K562 (cell line): ENCODE measurements at regions of chr11 and their contacts with region 1.

Region 1: DNA sequence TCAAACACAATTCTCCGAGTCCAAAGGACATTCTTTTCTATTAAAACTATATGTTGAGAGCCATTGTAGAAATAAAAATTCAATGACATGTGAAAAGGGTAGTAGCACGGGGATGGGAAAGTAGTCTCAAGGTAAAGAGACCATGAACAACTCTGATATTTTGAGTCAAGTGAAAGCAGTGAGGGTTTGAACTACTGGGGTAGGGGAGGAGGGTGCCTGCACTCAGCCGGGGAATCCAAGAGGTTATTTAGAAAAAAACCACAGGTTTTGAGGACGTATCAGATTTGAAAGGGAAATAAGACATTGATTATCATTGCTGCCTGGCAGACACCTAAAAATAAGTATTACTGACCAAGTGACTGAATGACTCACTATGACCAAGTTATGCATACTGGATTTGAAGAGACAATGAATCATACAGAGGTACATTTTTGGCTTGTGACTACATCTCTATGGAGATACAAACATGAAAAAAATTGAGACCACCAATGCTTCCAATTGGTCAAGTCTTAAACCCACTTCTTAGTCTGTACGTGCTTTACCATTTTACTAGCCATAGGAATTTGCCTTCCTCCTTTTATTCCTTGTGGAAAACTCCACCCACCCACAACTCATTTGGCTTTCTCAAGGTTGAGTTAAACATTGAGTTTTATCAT is 2.2 kb upstream of the OR52H1 start:
- DNase-seq: peak in 1 of 4 experiments; percentile 30
- ATAC-seq: peak; percentile 42; the same call in 1 of the 3 replicates
- H3K4me3 ChIP-seq: no peak overlapping the region
- H3K27ac ChIP-seq: no peak overlapping the region
- H3K4me1 ChIP-seq: peaks cover 0 to 6% of the 10 kb centered on the region in 2 experiments; a peak in 2 of 5 replicates
- H3K27me3 ChIP-seq: no peaks in the 10 kb centered on the region; a peak in 1 of 5 replicates
- CTCF ChIP-seq: no peak
- EP300 ChIP-seq: no peak
- POLR2A ChIP-seq: no peak
- RAD21 ChIP-seq: no peak

Region 2: DNA sequence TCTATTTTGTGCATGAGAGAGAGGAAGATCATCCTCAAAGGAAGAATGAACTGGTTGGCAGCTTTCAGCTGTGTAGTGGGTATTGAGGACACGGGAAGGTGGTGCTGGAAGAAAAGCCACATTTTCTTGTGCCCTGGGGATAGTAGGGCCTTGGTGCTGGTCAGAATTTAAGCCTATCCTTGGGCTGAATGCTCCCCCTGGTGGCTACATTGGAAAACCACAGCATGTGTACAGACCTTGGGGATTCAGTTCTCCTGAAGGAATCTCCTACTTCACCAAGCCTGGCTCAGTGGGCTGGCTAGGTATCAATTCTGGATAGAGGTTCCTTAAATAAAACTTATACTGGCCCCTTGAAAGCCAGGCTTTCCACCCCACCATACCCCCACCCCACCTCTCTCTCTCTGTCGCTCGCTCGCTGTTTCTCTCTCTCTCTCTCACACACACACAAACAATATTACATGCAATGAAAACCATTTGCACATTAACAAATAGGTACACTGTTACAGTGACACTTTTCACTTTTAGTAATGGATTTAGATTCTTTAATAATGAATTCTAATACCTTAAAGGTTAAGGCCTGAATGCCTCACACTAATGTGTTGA is 169.7 kb before region 1 on chr11:
- CTCF ChIA-PET with region 1: no interaction called
- POLR2A ChIA-PET with region 1: interaction called, 5 read pairs
- in situ Hi-C with region 1: no loop called
- intact Hi-C with region 1: loop called (anchors 10 kb)
- DNase-seq: peak; percentile 53 to 70 (median 56)
- ATAC-seq: peak; percentile 97
- H3K4me3 ChIP-seq: no peak overlapping the region
- H3K27ac ChIP-seq: no peak overlapping the region
- H3K4me1 ChIP-seq: no peaks in the 10 kb centered on the region; a peak in 1 of 5 replicates
- H3K27me3 ChIP-seq: no peaks in the 10 kb centered on the region
- CTCF ChIP-seq: peak; percentile 59 to 74 (median 69)
- EP300 ChIP-seq: no peak
- POLR2A ChIP-seq: no peak
- RAD21 ChIP-seq: peak; percentile 71 to 73

Region 3: DNA sequence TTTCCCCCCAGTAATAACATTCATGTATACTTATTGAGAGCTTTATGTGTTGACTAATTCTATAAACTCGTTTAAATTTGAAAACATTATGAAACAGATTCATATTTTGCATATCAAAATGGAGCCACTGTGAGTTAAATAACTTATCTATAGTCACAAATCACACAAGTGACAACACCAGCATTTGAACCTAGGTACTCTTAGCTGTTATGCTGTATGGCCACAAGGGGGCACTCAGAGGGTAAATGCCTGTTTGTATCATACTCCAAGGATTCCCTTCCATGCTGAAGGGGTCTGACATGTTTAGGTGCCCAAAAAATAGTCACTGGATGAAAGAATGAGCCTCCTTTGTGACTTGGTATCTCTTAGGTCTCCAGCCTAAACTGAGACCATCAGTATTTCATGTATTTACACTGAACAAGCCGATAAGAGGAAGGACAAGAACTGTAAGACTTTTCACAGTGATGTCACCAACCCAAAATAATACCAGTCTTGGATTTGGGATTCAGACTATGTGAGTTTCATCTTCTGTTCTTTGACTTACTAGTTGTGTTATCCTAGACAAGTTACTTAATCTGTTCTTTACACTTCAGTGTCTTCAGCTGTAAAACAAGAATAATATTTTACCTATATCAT is 74.3 kb before region 1 on chr11:
- CTCF ChIA-PET with region 1: interaction called, 13 read pairs
- POLR2A ChIA-PET with region 1: no interaction called
- in situ Hi-C with region 1: no loop called
- intact Hi-C with region 1: loop called (anchors 1 kb)
- DNase-seq: peak; percentile 69 to 77 (median 72)
- ATAC-seq: peak; percentile 97
- H3K4me3 ChIP-seq: no peak overlapping the region
- H3K27ac ChIP-seq: no peak overlapping the region; the same call in 2 of the 3 replicates
- H3K4me1 ChIP-seq: no peaks in the 10 kb centered on the region
- H3K27me3 ChIP-seq: no peaks in the 10 kb centered on the region
- CTCF ChIP-seq: peak; percentile 65 to 82 (median 79)
- EP300 ChIP-seq: no peak
- POLR2A ChIP-seq: no peak
- RAD21 ChIP-seq: peak; percentile 63 to 79

Region 4: GRCh38 chr11:5746614-5747013 is 196.0 kb after region 1 on chr11:
- CTCF ChIA-PET with region 1: no interaction called
- POLR2A ChIA-PET with region 1: no interaction called
- in situ Hi-C with region 1: no loop called
- intact Hi-C with region 1: no loop called
- DNase-seq: no peak
- ATAC-seq: no peak
- H3K4me3 ChIP-seq: no peak overlapping the region
- H3K27ac ChIP-seq: no peak overlapping the region
- H3K4me1 ChIP-seq: no peaks in the 10 kb centered on the region
- H3K27me3 ChIP-seq: no peaks in the 10 kb centered on the region
- CTCF ChIP-seq: no peak
- EP300 ChIP-seq: no peak
- POLR2A ChIP-seq: no peak
- RAD21 ChIP-seq: no peak